HepG2 (cell line): ENCODE measurements at regions of chr11 and their contacts with region 1.

Region 1: DNA sequence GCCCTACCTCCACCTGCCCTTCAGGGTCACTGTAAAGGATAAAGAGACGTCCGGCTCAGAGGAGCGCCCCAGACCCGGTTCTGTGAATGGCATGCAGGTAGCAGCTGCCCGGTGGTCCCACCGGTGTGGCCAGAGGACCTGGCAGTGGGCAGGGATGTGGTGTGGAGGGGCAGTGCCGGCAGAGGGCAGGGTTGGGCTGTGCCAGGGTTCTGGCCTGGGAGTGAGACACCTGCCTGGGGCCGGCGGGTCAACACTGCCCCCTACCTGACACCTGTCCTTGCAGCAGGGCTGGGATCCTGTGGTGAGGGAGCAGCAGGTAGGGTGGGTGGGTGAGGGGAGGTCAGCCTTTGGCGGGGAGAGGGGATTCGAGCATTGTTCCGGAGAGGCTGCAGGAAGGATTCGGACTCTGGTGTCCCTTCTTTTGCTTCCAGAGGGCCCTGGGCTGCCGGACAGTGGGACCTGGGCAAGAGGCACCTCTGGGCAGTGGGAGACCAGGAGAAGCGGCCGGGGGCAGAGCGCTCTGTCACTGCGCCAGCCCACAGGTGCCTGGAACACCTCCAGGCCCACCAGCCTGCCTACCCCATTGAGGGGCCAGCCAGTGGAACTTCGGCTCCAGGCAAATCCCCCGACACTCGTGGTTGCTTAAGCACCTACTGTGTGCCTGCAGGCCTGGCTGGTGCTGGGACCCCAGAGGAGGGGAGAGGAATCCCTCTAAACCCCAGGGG is 1.6 kb upstream of the PHLDA2 start:
- DNase-seq: peak; percentile 68
- ATAC-seq: peak; percentile 70
- H3K4me3 ChIP-seq: peak overlapping the region; percentile 49 to 70 (median 62); a peak in 5 of 6 replicates
- H3K27ac ChIP-seq: no peak overlapping the region
- H3K4me1 ChIP-seq: peaks cover 11% of the 10 kb centered on the region
- H3K27me3 ChIP-seq: peaks cover 7 to 32% of the 10 kb centered on the region in 2 experiments
- CTCF ChIP-seq: peak; percentile 94
- EP300 ChIP-seq: no peak
- POLR2A ChIP-seq: no peak
- RAD21 ChIP-seq: peak; percentile 88

Region 2: GRCh38 chr11:2892215-2893020 is 38.4 kb before region 1 on chr11:
- CTCF ChIA-PET with region 1: interaction called, 11 read pairs
- POLR2A ChIA-PET with region 1: no interaction called
- in situ Hi-C with region 1: no loop called
- intact Hi-C with region 1: no loop called
- DNase-seq: no peak
- ATAC-seq: peak; percentile 67
- H3K4me3 ChIP-seq: peak overlapping the region in 1 of 3 experiments; percentile 11; a peak in 2 of 6 replicates
- H3K27ac ChIP-seq: no peak overlapping the region
- H3K4me1 ChIP-seq: peaks cover 39% of the 10 kb centered on the region
- H3K27me3 ChIP-seq: peaks cover 3 to 18% of the 10 kb centered on the region in 2 experiments; a peak in 4 of 5 replicates
- CTCF ChIP-seq: peak; percentile 99
- EP300 ChIP-seq: no peak
- POLR2A ChIP-seq: no peak
- RAD21 ChIP-seq: peak; percentile 93

Region 3: DNA sequence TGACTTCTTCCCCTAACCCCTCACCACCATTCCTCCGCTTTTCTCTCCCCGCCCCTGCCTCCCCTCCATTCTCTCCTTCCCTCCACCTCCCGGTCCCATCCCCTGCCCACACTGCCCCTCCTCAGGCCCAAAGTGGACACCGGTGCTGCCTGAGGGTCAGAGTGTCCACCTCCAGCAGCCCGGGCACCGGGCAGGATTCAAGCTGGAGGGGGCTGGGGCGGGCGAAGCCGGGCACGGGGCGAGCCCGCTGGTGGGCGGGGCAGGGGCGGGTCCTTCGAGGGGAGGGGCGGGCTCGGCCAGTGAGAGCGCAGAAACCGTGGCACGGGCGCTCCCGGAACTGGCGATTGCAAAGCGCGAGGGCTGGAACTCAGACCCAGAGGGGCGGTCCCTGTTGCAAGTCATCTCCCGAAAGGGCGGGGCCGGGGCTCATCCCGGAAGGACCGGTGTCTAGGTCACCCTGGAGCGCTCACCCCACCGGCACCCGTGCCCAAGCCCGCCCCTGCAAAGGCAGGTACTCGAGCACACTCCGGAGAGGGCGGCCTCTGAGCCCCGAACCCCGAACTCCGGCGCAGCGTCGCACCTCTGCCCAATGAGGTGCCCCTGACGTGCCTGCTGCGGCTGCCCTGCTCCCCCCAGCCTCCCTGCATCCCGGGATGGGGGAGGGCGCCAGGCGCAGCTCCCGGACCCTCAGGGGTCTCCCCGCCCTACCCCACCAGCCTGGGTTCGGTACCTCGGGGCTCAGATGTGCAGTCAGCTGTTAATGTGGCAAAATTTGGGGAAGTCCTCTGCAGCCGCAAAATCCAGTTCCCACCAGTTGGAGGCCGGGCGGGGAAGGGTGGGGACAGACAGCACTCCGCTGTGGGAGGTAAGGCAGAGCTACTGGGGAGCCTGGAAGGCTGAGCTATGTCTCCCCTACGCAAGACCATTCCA is 28.7 kb before region 1 on chr11:
- CTCF ChIA-PET with region 1: interaction called, 3 read pairs
- POLR2A ChIA-PET with region 1: interaction called, 18 read pairs
- in situ Hi-C with region 1: no loop called
- intact Hi-C with region 1: no loop called
- DNase-seq: peak; percentile 90
- ATAC-seq: peak; percentile 87
- H3K4me3 ChIP-seq: peak overlapping the region; percentile 76 to 92 (median 84)
- H3K27ac ChIP-seq: peak overlapping the region; percentile 78
- H3K4me1 ChIP-seq: peaks cover 28% of the 10 kb centered on the region
- H3K27me3 ChIP-seq: no peaks in the 10 kb centered on the region; a peak in 2 of 5 replicates
- CTCF ChIP-seq: no peak
- EP300 ChIP-seq: no peak
- POLR2A ChIP-seq: peak in 1 of 2 experiments; percentile 33; a peak in 1 of 4 replicates
- RAD21 ChIP-seq: peak; percentile 23; the same call in 1 of the 2 replicates